ENCODE measurements at regions of chr9 and their contacts with region 1.

Region 1: GRCh38 chr9:10806868-10807267 is 194.1 kb upstream of the PTPRD start:
- DNase-seq: no peak
- H3K4me3 ChIP-seq: no peak overlapping the region
- H3K27ac ChIP-seq: no peak overlapping the region
- H3K27me3 ChIP-seq: no peaks in the 10 kb centered on the region
- CTCF ChIP-seq: no peak

Region 2: GRCh38 chr9:10793306-10793705 is 13.6 kb before region 1 on chr9:
- intact Hi-C with region 1: no loop called
- DNase-seq: no peak
- H3K4me3 ChIP-seq: no peak overlapping the region
- H3K27ac ChIP-seq: no peak overlapping the region
- H3K27me3 ChIP-seq: no peaks in the 10 kb centered on the region
- CTCF ChIP-seq: no peak

Region 3: DNA sequence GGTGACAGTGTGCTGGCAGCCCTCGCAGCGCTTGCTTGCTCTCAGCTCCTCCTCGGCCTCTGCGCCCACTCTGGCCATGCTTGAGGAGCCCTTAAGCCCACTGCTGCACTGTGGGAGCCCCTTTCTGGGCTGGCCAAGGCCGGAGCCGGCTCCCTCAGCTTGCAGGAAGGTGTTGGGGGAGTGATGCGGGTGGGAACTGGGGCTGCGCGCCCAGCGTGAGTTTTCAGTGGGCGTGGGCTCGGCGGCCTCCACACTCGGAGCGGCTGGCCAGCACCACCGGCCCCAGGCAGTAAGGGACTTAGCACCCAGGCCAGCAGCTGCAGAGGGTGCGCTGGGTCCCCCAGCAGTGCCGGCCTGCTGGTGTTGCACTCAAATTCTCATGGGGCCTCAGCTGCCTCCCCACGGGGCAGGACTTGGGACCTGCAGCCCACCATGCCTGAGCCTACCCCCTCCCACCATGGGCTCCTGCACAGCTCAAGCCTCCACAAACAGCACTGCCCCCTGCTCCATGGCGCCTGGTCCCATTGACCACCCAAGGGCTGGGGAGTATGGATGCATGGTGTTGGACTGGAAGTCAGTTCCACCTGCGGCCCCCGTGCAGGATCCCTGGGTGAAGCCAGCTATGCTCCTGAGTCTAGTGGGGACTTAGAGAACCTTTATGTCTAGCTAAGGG is 29.1 kb after region 1 on chr9:
- intact Hi-C with region 1: loop called in 1 of 2 experiments (anchors 2 kb)
- DNase-seq: no peak
- H3K4me3 ChIP-seq: no peak overlapping the region
- H3K27ac ChIP-seq: no peak overlapping the region
- H3K27me3 ChIP-seq: no peaks in the 10 kb centered on the region
- CTCF ChIP-seq: no peak